CD4-positive, alpha-beta T cell (primary cell): ENCODE measurements at regions of chr2 and their contacts with region 1.

Region 1: GRCh38 chr2:241096979-241097378 is 5.1 kb downstream of the MTERF4 start:
- DNase-seq: no peak
- ATAC-seq: no peak
- H3K4me3 ChIP-seq: no peak overlapping the region
- H3K4me3 Mint-ChIP-seq: no peak overlapping the region
- H3K27ac ChIP-seq: peak overlapping the region in 1 of 2 donors; percentile 68
- H3K27ac Mint-ChIP-seq: peak overlapping the region; percentile 95
- H3K4me1 ChIP-seq: peaks cover 74% of the 10 kb centered on the region
- H3K4me1 Mint-ChIP-seq: peaks cover 79% of the 10 kb centered on the region
- H3K27me3 ChIP-seq: no peaks in the 10 kb centered on the region
- H3K27me3 Mint-ChIP-seq: no peaks in the 10 kb centered on the region
- CTCF ChIP-seq: no peak

Region 2: DNA sequence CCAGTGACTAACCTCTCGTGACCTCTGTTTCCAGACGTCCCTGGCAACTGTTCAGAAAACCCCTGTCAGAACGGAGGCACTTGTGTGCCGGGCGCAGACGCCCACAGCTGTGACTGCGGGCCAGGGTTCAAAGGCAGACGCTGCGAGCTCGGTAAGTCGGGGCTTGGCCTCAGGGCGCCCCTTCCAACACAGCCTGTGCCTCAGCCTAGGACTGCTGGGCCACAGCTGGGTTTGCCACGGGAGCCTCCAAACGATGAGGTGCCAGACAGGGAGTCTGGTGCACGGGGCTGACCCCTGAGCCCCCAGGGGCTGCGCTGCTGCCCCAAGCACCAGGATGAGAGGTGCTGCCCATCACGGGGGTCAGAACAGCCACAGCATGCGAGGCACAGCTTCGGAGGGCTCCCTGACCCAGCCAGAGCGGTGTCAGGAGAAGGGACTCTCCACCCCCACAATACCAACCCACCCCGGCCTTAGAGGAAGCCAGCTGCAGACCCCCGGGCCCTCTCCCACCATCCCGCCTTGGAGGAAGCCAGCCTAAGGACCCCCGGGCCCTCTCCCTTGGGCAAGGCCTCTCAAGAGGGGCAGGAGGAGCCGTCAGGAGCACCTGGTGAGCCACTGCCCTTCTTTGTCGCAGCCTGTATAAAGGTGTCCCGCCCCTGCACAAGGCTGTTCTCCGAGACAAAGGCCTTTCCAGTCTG is 15.2 kb before region 1 on chr2:
- CTCF ChIA-PET with region 1: interaction called, 18 read pairs
- POLR2A ChIA-PET with region 1: interaction called, 9 read pairs
- intact Hi-C with region 1: no loop called
- DNase-seq: peak in 1 of 14 experiments; percentile 24
- ATAC-seq: no peak
- H3K4me3 ChIP-seq: no peak overlapping the region
- H3K4me3 Mint-ChIP-seq: no peak overlapping the region
- H3K27ac ChIP-seq: no peak overlapping the region
- H3K27ac Mint-ChIP-seq: peak overlapping the region; percentile 52
- H3K4me1 ChIP-seq: peaks cover 11% of the 10 kb centered on the region
- H3K4me1 Mint-ChIP-seq: peaks cover 6% of the 10 kb centered on the region
- H3K27me3 ChIP-seq: no peaks in the 10 kb centered on the region
- H3K27me3 Mint-ChIP-seq: no peaks in the 10 kb centered on the region
- CTCF ChIP-seq: no peak

Region 3: GRCh38 chr2:241110607-241111439 is 13.8 kb after region 1 on chr2:
- CTCF ChIA-PET with region 1: no interaction called
- POLR2A ChIA-PET with region 1: interaction called, 31 read pairs
- intact Hi-C with region 1: no loop called
- DNase-seq: peak in 2 of 14 experiments; percentile 36 to 42
- ATAC-seq: no peak
- H3K4me3 ChIP-seq: peak overlapping the region; percentile 68
- H3K4me3 Mint-ChIP-seq: peak overlapping the region; percentile 91
- H3K27ac ChIP-seq: peak overlapping the region; percentile 90 to 92
- H3K27ac Mint-ChIP-seq: peak overlapping the region; percentile 95
- H3K4me1 ChIP-seq: peaks cover 65% of the 10 kb centered on the region
- H3K4me1 Mint-ChIP-seq: peaks cover 61% of the 10 kb centered on the region
- H3K27me3 ChIP-seq: no peaks in the 10 kb centered on the region
- H3K27me3 Mint-ChIP-seq: no peaks in the 10 kb centered on the region
- CTCF ChIP-seq: no peak

Region 4: GRCh38 chr2:241217320-241218031 is 120.5 kb after region 1 on chr2:
- CTCF ChIA-PET with region 1: no interaction called
- POLR2A ChIA-PET with region 1: no interaction called
- intact Hi-C with region 1: loop called in 1 of 2 experiments (anchors 5 kb)
- DNase-seq: peak in 8 of 14 experiments; percentile 8 to 71 (median 20)
- ATAC-seq: peak; percentile 33
- H3K4me3 ChIP-seq: peak overlapping the region; percentile 52
- H3K4me3 Mint-ChIP-seq: peak overlapping the region; percentile 88
- H3K27ac ChIP-seq: no peak overlapping the region
- H3K27ac Mint-ChIP-seq: peak overlapping the region; percentile 80
- H3K4me1 ChIP-seq: peaks cover 13% of the 10 kb centered on the region
- H3K4me1 Mint-ChIP-seq: peaks cover 23% of the 10 kb centered on the region
- H3K27me3 ChIP-seq: no peaks in the 10 kb centered on the region
- H3K27me3 Mint-ChIP-seq: no peaks in the 10 kb centered on the region
- CTCF ChIP-seq: no peak